ENCODE measurements at regions of chr17 and their contacts with region 1.

Region 1: GRCh38 chr17:59786536-59787319 is 79.3 kb downstream of the VMP1 start:
- DNase-seq: peak; percentile 100
- ATAC-seq: peak; percentile 87
- H3K4me3 ChIP-seq: peak overlapping the region; percentile 20; the same call in 1 of the 2 replicates
- H3K27ac ChIP-seq: peak overlapping the region; percentile 95
- H3K4me1 ChIP-seq: peaks cover 24% of the 10 kb centered on the region
- H3K27me3 ChIP-seq: no peaks in the 10 kb centered on the region
- CTCF ChIP-seq: no peak; a peak in 1 of 6 replicates
- EP300 ChIP-seq: peak; percentile 98 to 99
- POLR2A ChIP-seq: 0 out of 2 replicates have a peak, but pooled peaks have one; percentile 25
- RAD21 ChIP-seq: peak; percentile 33; the same call in 1 of the 2 replicates

Region 2: GRCh38 chr17:59638553-59638952 is 148.2 kb before region 1 on chr17:
- CTCF ChIA-PET with region 1: no interaction called
- POLR2A ChIA-PET with region 1: no interaction called
- RAD21 ChIA-PET with region 1: no interaction called
- SMC1A ChIA-PET with region 1: no interaction called
- in situ Hi-C with region 1: no loop called
- intact Hi-C with region 1: no loop called
- DNase-seq: no peak
- ATAC-seq: no peak
- H3K4me3 ChIP-seq: no peak overlapping the region
- H3K27ac ChIP-seq: no peak overlapping the region
- H3K4me1 ChIP-seq: peaks cover 19% of the 10 kb centered on the region
- H3K27me3 ChIP-seq: no peaks in the 10 kb centered on the region
- CTCF ChIP-seq: no peak
- EP300 ChIP-seq: no peak
- POLR2A ChIP-seq: no peak
- RAD21 ChIP-seq: no peak

Region 3: DNA sequence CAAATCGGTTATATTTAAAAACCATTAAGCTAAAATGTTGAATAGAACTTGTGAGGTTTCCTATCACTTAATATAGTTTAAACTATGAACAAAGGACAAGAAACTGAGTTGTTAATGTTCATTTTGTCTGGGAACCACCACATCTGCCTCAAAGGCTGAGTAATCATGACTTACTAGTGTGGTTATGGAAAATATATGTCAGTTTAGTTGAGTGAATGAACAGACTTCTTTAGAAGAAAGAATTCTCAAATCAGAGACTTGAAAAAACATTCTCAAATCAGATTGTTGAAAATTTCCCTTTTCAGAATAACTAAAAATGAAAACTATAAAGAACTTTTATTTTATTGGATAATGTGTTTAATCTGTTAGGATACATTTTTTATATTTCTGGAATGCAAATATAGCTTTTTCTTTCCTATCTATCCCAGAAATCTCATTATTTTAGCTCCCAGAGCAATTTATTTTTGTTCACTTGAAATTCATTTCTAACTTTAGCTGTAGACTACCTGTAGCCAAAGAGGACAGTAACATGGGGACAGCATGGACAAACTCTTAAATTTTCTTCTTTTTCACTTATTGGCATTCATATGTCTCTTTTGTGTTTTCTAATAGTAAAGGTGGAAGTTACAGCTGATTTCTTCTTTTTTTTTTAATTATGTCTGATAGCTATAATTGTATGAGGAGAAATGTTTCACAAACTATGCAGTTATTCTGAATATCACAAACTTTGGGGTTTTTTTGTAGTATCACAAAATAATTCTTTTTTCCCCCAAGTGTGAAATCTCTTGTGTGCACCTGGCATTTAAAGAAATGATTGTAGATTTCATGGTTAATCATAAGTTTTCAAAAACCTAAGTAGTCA is 24.0 kb before region 1 on chr17:
- CTCF ChIA-PET with region 1: interaction called, 20 read pairs
- POLR2A ChIA-PET with region 1: interaction called, 7 read pairs
- RAD21 ChIA-PET with region 1: interaction called, 51 read pairs
- SMC1A ChIA-PET with region 1: interaction called, 53 read pairs
- in situ Hi-C with region 1: no loop called
- intact Hi-C with region 1: no loop called
- DNase-seq: no peak
- ATAC-seq: peak; percentile 85
- H3K4me3 ChIP-seq: no peak overlapping the region
- H3K27ac ChIP-seq: peak overlapping the region; percentile 47
- H3K4me1 ChIP-seq: peaks cover 4% of the 10 kb centered on the region; the same call in 1 of the 2 replicates
- H3K27me3 ChIP-seq: no peaks in the 10 kb centered on the region
- CTCF ChIP-seq: no peak
- EP300 ChIP-seq: 0 out of 4 replicates have a peak, but pooled peaks of 1 of the 2 experiments have one; percentile 29
- POLR2A ChIP-seq: no peak
- RAD21 ChIP-seq: no peak

Region 4: GRCh38 chr17:59804901-59805465 is 18.3 kb after region 1 on chr17:
- CTCF ChIA-PET with region 1: interaction called, 7 read pairs
- POLR2A ChIA-PET with region 1: interaction called, 13 read pairs
- RAD21 ChIA-PET with region 1: interaction called, 17 read pairs
- SMC1A ChIA-PET with region 1: interaction called, 34 read pairs
- in situ Hi-C with region 1: no loop called
- intact Hi-C with region 1: no loop called
- DNase-seq: no peak
- ATAC-seq: peak; percentile 61
- H3K4me3 ChIP-seq: peak overlapping the region; percentile 33
- H3K27ac ChIP-seq: peak overlapping the region; percentile 90
- H3K4me1 ChIP-seq: peaks cover 3% of the 10 kb centered on the region; the same call in 1 of the 2 replicates
- H3K27me3 ChIP-seq: no peaks in the 10 kb centered on the region
- CTCF ChIP-seq: no peak
- EP300 ChIP-seq: no peak
- POLR2A ChIP-seq: no peak
- RAD21 ChIP-seq: no peak

Region 5: GRCh38 chr17:59829217-59830006 is 42.7 kb after region 1 on chr17:
- CTCF ChIA-PET with region 1: interaction called, 51 read pairs
- POLR2A ChIA-PET with region 1: interaction called, 213 read pairs
- RAD21 ChIA-PET with region 1: interaction called, 223 read pairs
- SMC1A ChIA-PET with region 1: interaction called, 250 read pairs
- in situ Hi-C with region 1: loop called (anchors 5 kb)
- intact Hi-C with region 1: loop called (anchors 1 kb)
- DNase-seq: peak; percentile 100
- ATAC-seq: peak; percentile 71
- H3K4me3 ChIP-seq: peak overlapping the region; percentile 65
- H3K27ac ChIP-seq: peak overlapping the region; percentile 98
- H3K4me1 ChIP-seq: peaks cover 88% of the 10 kb centered on the region
- H3K27me3 ChIP-seq: no peaks in the 10 kb centered on the region
- CTCF ChIP-seq: no peak
- EP300 ChIP-seq: peak; percentile 97 to 99
- POLR2A ChIP-seq: peak; percentile 42; the same call in 1 of the 2 replicates
- RAD21 ChIP-seq: peak; percentile 18; the same call in 1 of the 2 replicates

Region 6: GRCh38 chr17:59837308-59838051 is 50.8 kb after region 1 on chr17:
- CTCF ChIA-PET with region 1: interaction called, 25 read pairs
- POLR2A ChIA-PET with region 1: interaction called, 213 read pairs
- RAD21 ChIA-PET with region 1: interaction called, 223 read pairs
- SMC1A ChIA-PET with region 1: interaction called, 250 read pairs
- in situ Hi-C with region 1: no loop called
- intact Hi-C with region 1: loop called (anchors 2 kb)
- DNase-seq: peak; percentile 97
- ATAC-seq: peak; percentile 70
- H3K4me3 ChIP-seq: peak overlapping the region; percentile 91
- H3K27ac ChIP-seq: peak overlapping the region; percentile 97
- H3K4me1 ChIP-seq: peaks cover 35% of the 10 kb centered on the region
- H3K27me3 ChIP-seq: no peaks in the 10 kb centered on the region
- CTCF ChIP-seq: no peak
- EP300 ChIP-seq: peak in 1 of 2 experiments; percentile 70; a peak in 2 of 4 replicates
- POLR2A ChIP-seq: peak; percentile 94
- RAD21 ChIP-seq: no peak

Region 7: DNA sequence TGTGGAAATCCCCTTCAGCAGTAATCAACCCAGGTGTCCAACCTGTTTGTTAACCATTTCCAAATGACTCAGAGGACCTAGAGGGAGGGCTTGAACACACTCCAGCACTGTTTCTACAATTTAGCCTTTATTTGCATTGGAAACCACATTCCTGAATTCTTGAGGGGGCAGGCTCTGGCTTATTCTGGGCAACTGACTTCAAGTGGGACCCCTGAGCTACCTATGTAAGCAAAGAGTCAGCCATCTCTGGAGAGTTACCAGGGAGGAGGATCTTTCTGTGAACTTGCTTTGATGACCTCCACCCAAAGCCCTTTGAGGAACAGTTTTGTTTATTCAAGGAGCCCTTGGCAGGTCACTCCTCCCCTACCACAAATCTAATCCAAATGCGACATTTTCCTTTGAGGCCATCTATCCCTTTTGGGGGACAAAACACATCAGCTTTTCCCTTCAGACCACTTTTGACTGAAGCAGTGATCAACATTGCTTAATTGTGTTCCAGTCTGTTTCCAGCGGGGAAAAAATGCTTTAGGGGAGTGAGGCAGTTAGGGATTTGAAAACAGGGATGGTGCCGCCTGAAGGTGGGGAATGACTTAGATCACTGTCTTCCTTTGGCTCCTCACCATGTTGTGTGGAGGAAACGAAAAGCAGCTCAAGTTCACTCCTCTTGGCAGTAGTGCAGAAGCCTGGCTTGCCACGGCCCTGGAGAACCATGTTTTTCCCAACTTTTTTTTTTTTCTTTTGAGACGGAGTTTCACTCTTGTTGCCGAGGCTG is 59.9 kb after region 1 on chr17:
- CTCF ChIA-PET with region 1: interaction called, 12 read pairs
- POLR2A ChIA-PET with region 1: interaction called, 62 read pairs
- RAD21 ChIA-PET with region 1: interaction called, 45 read pairs
- SMC1A ChIA-PET with region 1: interaction called, 143 read pairs
- in situ Hi-C with region 1: no loop called
- intact Hi-C with region 1: loop called (anchors 1 kb)
- DNase-seq: peak; percentile 91
- ATAC-seq: peak; percentile 54
- H3K4me3 ChIP-seq: peak overlapping the region; percentile 28; the same call in 1 of the 2 replicates
- H3K27ac ChIP-seq: peak overlapping the region; percentile 68
- H3K4me1 ChIP-seq: peaks cover 55% of the 10 kb centered on the region
- H3K27me3 ChIP-seq: no peaks in the 10 kb centered on the region
- CTCF ChIP-seq: no peak
- EP300 ChIP-seq: peak; percentile 65 to 76
- POLR2A ChIP-seq: no peak
- RAD21 ChIP-seq: no peak